ENCODE measurements at regions of chr5 and their contacts with region 1.

Region 1: GRCh38 chr5:12292610-12293204 is 388.5 kb upstream of the CTNND2 start:
- DNase-seq: no peak
- ATAC-seq: no peak
- H3K4me3 ChIP-seq: no peak overlapping the region
- H3K27ac ChIP-seq: no peak overlapping the region
- H3K4me1 ChIP-seq: no peaks in the 10 kb centered on the region
- H3K27me3 ChIP-seq: no peaks in the 10 kb centered on the region
- CTCF ChIP-seq: 0 out of 2 replicates have a peak, but pooled peaks have one; percentile 8
- POLR2A ChIP-seq: no peak
- RAD21 ChIP-seq: 0 out of 2 replicates have a peak, but pooled peaks have one; percentile 6

Region 2: GRCh38 chr5:12854386-12854785 is 561.7 kb after region 1 on chr5:
- CTCF ChIA-PET with region 1: no interaction called
- POLR2A ChIA-PET with region 1: no interaction called
- dilution Hi-C with region 1: no loop called
- in situ Hi-C with region 1: no loop called
- intact Hi-C with region 1: loop called (anchors 10 kb)
- DNase-seq: no peak
- ATAC-seq: no peak
- H3K4me3 ChIP-seq: no peak overlapping the region
- H3K27ac ChIP-seq: no peak overlapping the region
- H3K4me1 ChIP-seq: no peaks in the 10 kb centered on the region
- H3K27me3 ChIP-seq: no peaks in the 10 kb centered on the region
- CTCF ChIP-seq: no peak
- POLR2A ChIP-seq: no peak
- RAD21 ChIP-seq: no peak

Measured in IMR-90 (cell line).